ENCODE measurements at regions of chr2 and their contacts with region 1.

Region 1: DNA sequence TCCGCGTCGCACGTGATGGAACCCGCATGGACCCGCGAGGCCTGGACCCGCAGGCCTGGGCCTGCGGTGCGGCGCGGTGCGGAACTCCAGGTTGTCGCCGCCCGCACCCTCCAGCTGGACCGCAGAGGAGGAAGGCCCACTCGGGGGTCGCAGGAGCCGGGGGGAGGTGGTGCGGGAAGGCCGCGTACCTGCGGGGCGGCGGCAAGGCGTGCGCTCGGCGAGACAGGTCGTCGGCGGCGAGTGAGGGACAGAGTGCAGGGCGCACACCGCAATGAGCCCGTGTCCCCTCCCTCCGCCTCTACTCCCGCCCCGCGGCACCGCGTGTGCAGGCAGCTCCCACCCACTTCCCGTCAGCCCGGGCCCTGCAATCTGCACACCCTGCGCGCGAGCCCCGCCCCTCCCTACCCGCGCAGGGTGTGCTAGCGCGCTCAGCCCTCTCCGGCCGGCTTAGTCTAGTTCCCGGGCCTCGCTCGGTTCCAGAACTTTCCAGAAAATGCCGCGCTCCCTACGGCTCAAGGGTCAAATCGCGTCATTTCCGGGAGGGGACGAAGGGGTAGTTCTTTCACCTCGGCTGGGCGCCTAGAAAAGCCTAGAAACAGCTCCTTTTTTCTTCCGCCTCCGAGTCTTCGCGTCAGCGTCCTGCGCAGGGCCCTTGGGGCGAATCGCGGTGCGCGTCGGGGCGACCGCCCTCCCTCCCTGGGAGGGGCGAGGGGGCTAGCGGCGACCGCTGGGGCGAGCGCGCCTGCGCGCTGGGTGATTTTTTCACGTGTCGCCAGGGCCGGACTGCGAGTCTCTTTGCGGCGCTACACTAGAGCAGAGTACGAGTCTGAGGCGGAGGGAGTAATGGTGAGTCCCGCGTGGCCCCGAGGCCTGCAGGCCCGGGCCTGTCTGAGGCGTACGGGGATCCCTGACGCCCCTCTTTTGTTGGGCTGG is at the starts of genes HSPD1 and HSPE1:
- DNase-seq: peak; percentile 84 to 99
- ATAC-seq: peak; percentile 93
- H3K4me3 ChIP-seq: peak within 1 kb of the TSS; percentile 86
- H3K27ac ChIP-seq: peak within 1 kb of the TSS; percentile 87 to 99
- H3K4me1 ChIP-seq: peaks cover 48% of the 10 kb centered on the region
- CTCF ChIP-seq: no peak
- EP300 ChIP-seq: peak in 1 of 2 experiments; percentile 52; a peak in 1 of 5 replicates
- POLR2A ChIP-seq: peak; percentile 100
- RAD21 ChIP-seq: no peak
- polyA plus RNA-seq, gene HSPD1: 767 and 790 TPM in 2 replicates
- polyA plus RNA-seq, gene HSPE1: 286 and 468 TPM in 2 replicates

Region 2: DNA sequence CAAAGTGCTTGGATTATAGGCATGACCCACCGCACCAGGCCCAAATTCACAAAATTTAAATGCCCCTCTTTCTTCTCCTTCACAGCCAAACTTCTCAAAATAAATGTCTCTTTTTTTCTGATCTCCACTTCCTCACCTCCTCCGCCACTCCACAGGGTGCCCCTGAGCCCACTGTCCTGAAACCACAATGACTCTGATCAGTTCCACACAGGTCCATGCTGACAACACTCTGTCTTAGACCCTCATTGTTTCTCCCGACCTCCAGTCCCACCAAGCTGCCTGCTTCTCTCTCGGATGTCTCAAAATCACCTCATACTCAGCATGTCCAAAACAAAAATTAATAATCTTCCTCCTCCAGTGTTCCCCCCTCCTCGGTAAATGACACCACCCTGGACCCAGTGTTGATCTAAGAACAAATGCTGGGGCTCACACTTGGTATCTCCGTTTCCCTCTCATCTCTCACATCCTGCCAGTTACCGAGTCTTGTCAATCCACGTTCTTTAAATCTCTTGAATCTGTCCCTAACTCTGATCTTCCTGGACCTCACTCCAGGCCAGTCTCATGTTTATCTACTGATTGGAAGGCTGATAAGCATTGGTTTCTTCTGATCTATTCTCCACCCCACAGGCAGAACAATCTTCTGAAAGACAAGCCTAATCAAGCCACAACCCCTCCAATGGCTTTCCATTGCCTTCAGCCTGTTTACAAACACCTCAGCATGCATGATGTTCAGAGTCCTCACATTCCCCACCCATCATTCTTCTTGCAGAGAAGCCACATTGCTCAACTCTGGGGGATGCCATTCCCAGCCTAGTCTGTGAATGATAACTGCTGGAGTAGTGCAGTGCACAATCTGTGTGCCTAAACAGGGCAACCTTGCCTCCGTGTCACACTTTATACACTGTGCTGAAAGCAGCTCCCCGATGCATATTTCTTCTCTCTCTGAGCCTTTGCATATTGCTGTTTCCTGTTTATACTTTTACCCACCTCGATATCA is 176.8 kb before region 1 on chr2:
- CTCF ChIA-PET with region 1: no interaction called
- POLR2A ChIA-PET with region 1: no interaction called
- DNase-seq: no peak
- ATAC-seq: peak in 1 of 2 experiments; percentile 13; a peak in 2 of 6 replicates
- H3K4me3 ChIP-seq: no peak overlapping the region
- H3K27ac ChIP-seq: no peak overlapping the region
- H3K4me1 ChIP-seq: no peaks in the 10 kb centered on the region
- CTCF ChIP-seq: no peak
- EP300 ChIP-seq: no peak
- POLR2A ChIP-seq: no peak
- RAD21 ChIP-seq: no peak

Region 3: DNA sequence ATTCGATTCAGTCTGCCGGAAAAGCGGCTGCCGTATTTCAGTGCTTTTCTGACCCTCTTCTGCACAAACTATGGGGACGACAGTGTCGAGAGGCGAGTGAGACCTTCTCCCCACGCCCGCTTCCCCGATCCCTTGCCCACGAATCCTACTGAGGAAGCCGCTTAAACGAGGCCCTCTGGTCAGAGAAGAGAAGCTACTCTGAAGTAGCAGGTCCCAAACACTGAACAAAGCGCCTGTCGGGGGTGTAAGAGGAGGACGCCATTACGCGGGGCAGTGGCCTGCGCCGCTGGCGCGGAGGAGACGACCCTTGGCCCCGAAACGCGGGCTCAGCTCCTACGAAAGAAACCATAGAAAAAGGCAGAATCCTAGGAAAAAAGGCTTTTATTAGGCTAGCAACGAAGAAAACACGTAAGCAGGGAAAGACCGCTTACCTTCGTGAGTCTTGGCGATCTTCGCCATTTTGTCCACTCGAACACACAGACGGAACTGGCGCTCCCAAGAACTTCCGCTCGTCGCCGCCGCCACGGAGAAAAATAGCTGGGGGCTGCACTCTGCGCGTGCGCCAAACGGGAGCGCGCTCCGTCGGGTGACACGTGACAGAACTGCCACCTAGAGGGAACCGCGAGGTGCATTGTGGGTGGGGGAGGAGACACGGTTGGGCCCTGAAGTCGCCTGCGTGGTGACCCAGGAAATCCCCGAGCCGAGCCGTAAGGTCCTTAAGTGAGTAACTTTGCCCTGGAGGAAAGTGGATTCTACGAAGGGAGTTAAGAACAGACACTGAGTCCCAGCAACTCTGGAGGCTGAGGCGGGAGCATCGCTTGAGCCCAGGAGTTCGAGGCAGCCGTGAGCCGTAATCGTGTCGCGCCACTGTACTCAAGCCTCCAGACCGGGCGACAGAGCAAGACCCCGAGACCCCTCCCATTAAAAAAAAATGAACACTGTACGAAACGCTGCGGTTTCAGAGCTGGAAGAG is 65.0 kb before region 1 on chr2 and contains the start of gene SF3B1:
- CTCF ChIA-PET with region 1: no interaction called
- POLR2A ChIA-PET with region 1: interaction called, 18 read pairs
- DNase-seq: peak; percentile 89 to 98
- ATAC-seq: peak; percentile 93 to 96
- H3K4me3 ChIP-seq: peak within 1 kb of the TSS; percentile 90
- H3K27ac ChIP-seq: peak within 1 kb of the TSS; percentile 92 to 93
- H3K4me1 ChIP-seq: peaks cover 28% of the 10 kb centered on the region; the same call in 2 of the 3 replicates
- CTCF ChIP-seq: no peak
- EP300 ChIP-seq: no peak
- POLR2A ChIP-seq: peak; percentile 87
- RAD21 ChIP-seq: no peak
- polyA plus RNA-seq, gene SF3B1: 400 and 436 TPM in 2 replicates

Region 4: DNA sequence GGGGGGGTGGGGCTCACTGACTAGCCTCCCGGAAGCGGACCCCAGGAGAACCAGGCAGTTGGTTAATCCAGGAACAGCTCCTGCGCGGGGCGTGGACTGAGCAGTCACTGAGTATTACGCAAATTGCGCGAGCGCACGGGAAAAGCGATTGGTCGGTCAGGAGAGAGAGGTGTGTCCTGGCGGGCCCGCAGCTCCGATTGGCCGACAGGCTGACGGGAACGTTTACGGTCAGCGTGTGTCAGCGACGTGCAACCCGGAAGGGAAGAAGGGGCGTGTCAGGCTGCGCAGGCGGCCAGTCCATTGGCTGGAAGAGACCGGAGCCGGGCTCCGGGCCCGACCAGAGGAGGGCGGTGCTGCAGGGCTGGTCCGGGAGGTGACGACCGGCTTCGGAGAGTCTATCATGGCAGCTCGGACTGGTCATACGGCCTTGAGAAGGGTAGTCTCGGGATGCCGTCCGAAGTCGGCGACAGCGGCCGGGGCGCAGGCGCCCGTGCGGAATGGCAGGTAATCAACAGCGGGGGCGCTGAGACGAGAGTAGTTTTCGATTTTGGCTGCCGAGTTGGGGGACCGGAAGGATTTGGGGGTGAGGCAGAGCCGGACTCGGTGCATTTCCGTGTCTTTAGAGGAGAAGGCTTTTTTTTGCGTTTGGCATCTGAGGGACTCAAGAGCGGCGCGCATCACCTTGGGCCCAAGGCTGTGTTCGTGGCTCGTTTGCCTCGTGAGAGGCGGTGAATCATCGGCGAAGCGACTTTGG is 46.5 kb before region 1 on chr2 and contains the start of gene COQ10B:
- CTCF ChIA-PET with region 1: interaction called, 3 read pairs
- POLR2A ChIA-PET with region 1: interaction called, 33 read pairs
- DNase-seq: peak; percentile 93 to 100
- ATAC-seq: peak; percentile 95 to 96
- H3K4me3 ChIP-seq: peak within 1 kb of the TSS; percentile 83
- H3K27ac ChIP-seq: peak within 1 kb of the TSS; percentile 97
- H3K4me1 ChIP-seq: peaks cover 17% of the 10 kb centered on the region; the same call in 2 of the 3 replicates
- CTCF ChIP-seq: no peak
- EP300 ChIP-seq: no peak
- POLR2A ChIP-seq: peak; percentile 73
- RAD21 ChIP-seq: no peak; a peak in 1 of 5 replicates
- polyA plus RNA-seq, gene COQ10B: 6.1 and 11.2 TPM in 2 replicates

Region 5: GRCh38 chr2:197487385-197487784 is 12.5 kb before region 1 on chr2:
- CTCF ChIA-PET with region 1: no interaction called
- POLR2A ChIA-PET with region 1: interaction called, 25 read pairs
- DNase-seq: no peak
- ATAC-seq: no peak
- H3K4me3 ChIP-seq: no peak overlapping the region
- H3K27ac ChIP-seq: no peak overlapping the region
- H3K4me1 ChIP-seq: peaks cover 5% of the 10 kb centered on the region; the same call in 1 of the 3 replicates
- CTCF ChIP-seq: no peak
- EP300 ChIP-seq: no peak
- POLR2A ChIP-seq: no peak
- RAD21 ChIP-seq: no peak

Region 6: DNA sequence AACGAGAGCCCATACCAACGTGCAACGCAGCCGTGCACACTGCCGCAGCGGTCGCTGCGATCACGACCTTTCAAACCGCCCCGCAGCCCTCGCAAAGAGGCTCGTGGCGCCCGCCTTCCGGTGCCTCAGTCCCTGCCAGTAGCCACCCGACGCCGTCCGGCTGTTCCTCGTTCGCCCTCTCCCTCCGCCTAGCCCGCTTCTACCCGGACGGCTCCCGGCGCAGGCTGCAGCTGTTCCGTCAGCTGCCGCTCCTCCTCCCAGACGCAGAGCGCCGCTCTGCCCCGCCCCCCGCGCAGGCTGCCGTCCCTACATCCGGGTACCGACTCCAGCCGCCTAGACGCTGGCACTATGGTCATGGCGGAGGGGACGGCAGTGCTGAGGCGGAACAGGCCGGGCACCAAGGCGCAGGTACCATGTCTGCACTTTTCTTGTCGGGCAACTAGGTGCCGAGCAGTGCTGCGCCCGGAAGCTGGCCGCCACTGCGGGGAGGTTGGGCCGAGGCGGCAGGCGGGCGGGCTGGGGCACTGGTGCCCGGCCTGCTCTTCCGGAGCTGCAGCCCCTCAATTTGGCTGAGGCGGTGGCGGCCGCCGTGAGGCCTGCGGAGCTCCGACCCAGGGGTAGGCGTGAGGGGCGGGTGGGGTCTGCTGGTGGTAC is 16.0 kb after region 1 on chr2 and contains the start of gene MOB4:
- CTCF ChIA-PET with region 1: interaction called, 6 read pairs
- POLR2A ChIA-PET with region 1: interaction called, 57 read pairs
- DNase-seq: peak; percentile 73 to 96
- ATAC-seq: peak; percentile 97 to 98
- H3K4me3 ChIP-seq: peak within 1 kb of the TSS; percentile 80
- H3K27ac ChIP-seq: peak within 1 kb of the TSS; percentile 94 to 98
- H3K4me1 ChIP-seq: peaks cover 13% of the 10 kb centered on the region
- CTCF ChIP-seq: no peak
- EP300 ChIP-seq: no peak
- POLR2A ChIP-seq: peak; percentile 87
- RAD21 ChIP-seq: no peak; a peak in 1 of 5 replicates
- polyA plus RNA-seq, gene MOB4: 44.2 and 74.7 TPM in 2 replicates

Region 7: DNA sequence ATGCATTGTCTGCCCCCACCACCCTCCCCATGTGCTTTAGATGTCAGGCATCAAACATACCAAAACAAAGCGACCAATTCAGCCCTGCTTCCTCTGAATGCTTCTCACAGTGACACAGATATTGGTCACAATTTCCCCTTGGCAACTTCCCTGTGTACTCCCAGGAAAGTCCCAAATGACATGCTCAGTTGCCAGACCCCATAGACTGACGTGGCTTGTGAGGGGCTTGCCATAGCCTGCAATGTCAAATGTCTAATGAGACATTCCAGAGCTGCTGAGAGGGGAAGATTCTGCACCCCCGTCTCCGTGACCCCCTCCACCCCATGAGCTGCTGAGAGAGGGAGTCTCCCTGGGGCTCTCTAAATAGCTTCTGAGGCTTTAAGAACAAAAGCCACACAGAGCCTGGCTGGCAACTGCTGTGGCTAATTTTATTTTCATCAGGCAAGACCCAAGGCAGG is 128.2 kb after region 1 on chr2:
- CTCF ChIA-PET with region 1: no interaction called
- POLR2A ChIA-PET with region 1: no interaction called
- DNase-seq: no peak
- ATAC-seq: peak in 1 of 2 experiments; percentile 30; a peak in 1 of 6 replicates
- H3K4me3 ChIP-seq: no peak overlapping the region
- H3K27ac ChIP-seq: no peak overlapping the region
- H3K4me1 ChIP-seq: no peaks in the 10 kb centered on the region
- CTCF ChIP-seq: no peak
- EP300 ChIP-seq: no peak
- POLR2A ChIP-seq: no peak
- RAD21 ChIP-seq: no peak

Region 8: GRCh38 chr2:197705121-197705911 is 205.5 kb after region 1 on chr2 and contains the start of gene MARS2:
- CTCF ChIA-PET with region 1: no interaction called
- POLR2A ChIA-PET with region 1: interaction called, 10 read pairs
- DNase-seq: peak; percentile 74 to 92
- ATAC-seq: peak; percentile 89 to 92
- H3K4me3 ChIP-seq: peak within 1 kb of the TSS; percentile 64
- H3K27ac ChIP-seq: peak within 1 kb of the TSS; percentile 72 to 87
- H3K4me1 ChIP-seq: peaks cover 30% of the 10 kb centered on the region
- CTCF ChIP-seq: no peak
- EP300 ChIP-seq: no peak
- POLR2A ChIP-seq: peak; percentile 97
- RAD21 ChIP-seq: 0 out of 5 replicates have a peak, but pooled peaks of 1 of the 2 experiments have one; percentile 8
- polyA plus RNA-seq, gene MARS2: 10.9 and 11.6 TPM in 2 replicates